Activated CD4-positive, alpha-beta T cell treated with anti-CD3 and anti-CD28 coated beads, Interleukin-2, amount 10 ng/mL, durations not matched to agents 24 days and 14 days (primary cell): ENCODE measurements at regions of chr12 and their contacts with region 1.

Region 1: DNA sequence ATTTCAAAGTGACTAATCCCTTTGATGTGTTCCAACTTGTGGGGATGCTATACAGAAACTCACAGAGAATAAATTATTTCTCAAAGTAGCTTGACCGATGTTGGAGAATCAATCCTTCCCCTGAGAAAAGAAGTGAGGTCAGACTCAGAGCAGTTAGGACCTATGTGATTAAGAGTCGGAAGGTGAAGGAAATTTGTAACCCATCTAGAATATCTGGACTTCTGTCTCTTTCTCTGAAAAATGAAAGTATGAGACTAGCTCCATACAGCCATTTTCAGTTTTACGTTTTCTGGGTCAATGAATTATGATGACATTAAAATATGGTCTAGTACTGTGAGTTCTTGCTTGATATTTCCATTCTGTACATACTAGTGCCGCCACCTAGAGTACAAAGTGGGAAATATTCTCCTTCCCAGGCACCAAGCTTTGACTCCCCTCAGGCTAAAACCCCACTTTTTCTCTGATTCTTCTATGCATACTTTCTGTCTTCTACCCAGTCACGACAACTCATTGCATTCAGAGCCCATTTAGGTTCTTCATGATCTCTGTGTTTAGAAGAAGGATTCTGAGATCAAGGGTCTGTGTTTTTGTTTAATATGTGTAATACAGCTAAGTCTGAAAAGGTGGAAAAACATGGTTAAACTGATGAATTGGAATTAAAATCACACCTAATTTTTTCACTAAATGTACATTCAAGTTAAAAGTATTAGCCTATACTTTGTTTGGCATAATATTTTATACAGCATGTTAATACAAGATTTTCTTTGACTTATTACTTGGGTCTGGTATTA is 6.9 kb upstream of the NTS start:
- DNase-seq: peak; percentile 68
- H3K4me3 Mint-ChIP-seq: no peak overlapping the region
- H3K27ac Mint-ChIP-seq: no peak overlapping the region
- H3K4me1 Mint-ChIP-seq: no peaks in the 10 kb centered on the region
- H3K27me3 Mint-ChIP-seq: no peaks in the 10 kb centered on the region

Region 2: DNA sequence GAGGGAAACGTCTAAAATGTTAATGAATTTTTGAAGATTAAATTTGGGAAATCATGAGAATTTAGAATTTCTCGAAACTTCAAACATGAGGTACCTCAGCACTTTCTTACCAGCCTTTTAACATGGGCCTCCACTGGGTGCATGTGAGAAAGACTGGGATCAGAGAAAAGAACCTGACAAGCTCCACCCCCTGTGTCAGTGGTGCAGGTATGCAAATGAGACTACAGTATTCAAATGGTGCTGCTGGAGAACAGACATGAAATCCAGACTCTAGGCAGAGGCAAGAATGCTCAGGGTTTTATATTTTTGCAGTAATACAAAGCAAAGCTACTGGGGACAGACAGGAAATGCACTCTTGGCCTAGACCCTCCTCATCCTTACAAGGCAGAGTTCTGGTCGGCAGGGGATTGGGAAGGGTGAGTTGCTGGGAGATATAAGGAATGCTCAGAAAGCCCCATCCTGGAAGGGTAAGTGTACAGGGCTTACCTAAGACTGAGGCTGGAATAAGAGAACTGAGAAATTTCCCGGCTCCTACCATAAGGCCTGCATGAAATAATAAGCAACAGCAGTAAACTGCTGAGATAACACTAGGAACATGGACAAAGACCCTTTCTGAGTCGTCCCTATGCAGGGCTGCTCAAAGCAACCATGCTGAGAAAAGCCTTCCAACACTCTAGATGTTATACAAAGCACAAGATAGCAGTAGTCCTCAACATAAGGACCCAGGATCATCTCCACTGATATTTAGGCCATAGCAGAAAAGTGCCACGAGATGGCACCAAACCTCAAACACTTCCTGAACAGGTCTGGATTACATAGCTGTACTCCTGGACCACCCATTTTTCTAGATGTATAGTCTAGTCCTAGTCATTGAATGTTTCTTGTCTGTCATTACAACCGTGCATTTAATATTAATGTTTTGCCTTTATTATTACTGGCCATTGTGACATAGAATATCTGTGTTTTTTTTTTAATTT is 291.8 kb before region 1 on chr12:
- intact Hi-C with region 1: loop called (anchors 2 kb)
- DNase-seq: peak; percentile 64
- H3K4me3 Mint-ChIP-seq: no peak overlapping the region
- H3K27ac Mint-ChIP-seq: no peak overlapping the region
- H3K4me1 Mint-ChIP-seq: no peaks in the 10 kb centered on the region
- H3K27me3 Mint-ChIP-seq: no peaks in the 10 kb centered on the region

Region 3: DNA sequence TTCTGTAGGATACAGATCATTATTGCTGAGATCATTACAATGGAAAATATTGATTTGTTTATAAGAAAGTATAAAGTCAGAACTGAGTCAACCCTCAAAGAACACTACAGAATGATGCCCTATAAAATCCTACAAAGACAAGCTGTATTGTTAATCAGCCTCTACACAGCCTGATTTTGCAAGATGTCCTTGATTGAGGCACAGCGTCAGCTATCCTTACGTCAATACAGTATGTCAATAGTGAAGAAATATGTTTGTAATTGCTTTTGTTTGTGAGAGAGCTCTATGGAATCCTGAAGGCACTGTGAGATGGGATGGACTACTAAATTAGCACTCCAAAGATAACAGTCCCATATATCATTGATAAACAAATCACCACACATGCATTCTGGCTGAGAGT is 101.7 kb before region 1 on chr12:
- intact Hi-C with region 1: no loop called
- DNase-seq: no peak
- H3K4me3 Mint-ChIP-seq: no peak overlapping the region
- H3K27ac Mint-ChIP-seq: no peak overlapping the region
- H3K4me1 Mint-ChIP-seq: no peaks in the 10 kb centered on the region
- H3K27me3 Mint-ChIP-seq: no peaks in the 10 kb centered on the region